Mammary epithelial cell (primary cell): ENCODE measurements at regions of chr3 and their contacts with region 1.

Region 1: DNA sequence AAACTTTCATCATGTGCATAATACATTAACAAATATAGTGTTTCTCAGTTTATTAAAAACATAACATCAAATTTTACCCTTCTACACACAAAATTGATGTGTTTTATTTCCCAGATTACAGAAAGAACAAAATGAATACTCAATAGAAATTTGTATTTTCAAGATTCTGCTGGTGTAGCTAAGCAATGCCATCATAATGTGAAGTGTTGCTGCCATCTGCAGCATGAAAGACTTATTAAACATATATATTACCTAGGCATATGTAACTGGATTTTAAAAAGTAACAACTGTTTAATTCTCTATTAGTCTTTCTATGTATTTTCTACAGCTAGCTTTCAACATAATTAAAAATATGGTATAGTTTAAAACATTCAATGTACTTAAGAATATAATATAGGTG is 27.5 kb downstream of the PLSCR5 start:
- DNase-seq: peak; percentile 40
- H3K4me3 ChIP-seq: no peak overlapping the region
- H3K27ac ChIP-seq: no peak overlapping the region
- H3K4me1 ChIP-seq: peaks cover 23% of the 10 kb centered on the region
- H3K27me3 ChIP-seq: no peaks in the 10 kb centered on the region
- CTCF ChIP-seq: peak; percentile 27 to 51

Region 2: DNA sequence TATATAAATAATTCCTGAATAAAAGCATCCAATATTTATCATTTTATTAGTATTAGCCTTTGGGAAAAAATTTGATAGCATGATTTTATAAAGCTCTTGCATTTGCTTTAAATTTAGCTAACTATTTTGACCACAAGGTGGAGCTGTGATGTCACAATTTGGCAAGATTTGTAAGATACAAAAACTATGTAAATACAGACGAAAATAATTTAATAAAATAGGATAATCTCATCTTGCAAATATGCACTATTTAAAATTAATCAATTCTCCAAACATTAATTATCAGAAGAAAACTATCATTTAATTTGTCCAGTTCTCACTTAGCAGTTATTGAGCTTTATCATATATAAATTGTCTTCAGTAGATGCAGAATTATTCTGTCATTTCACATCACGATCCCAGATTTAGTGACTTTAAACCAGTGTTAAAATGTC is 512.1 kb before region 1 on chr3:
- CTCF ChIA-PET with region 1: no interaction called
- dilution Hi-C with region 1: no loop called
- in situ Hi-C with region 1: loop called (anchors 25 kb)
- intact Hi-C with region 1: loop called (anchors 5 kb)
- DNase-seq: peak; percentile 24
- H3K4me3 ChIP-seq: no peak overlapping the region
- H3K27ac ChIP-seq: no peak overlapping the region
- H3K4me1 ChIP-seq: no peaks in the 10 kb centered on the region
- H3K27me3 ChIP-seq: no peaks in the 10 kb centered on the region
- CTCF ChIP-seq: peak; percentile 54 to 61

Region 3: GRCh38 chr3:146218880-146219866 is 358.5 kb before region 1 on chr3:
- CTCF ChIA-PET with region 1: no interaction called
- dilution Hi-C with region 1: no loop called
- in situ Hi-C with region 1: loop called (anchors 10 to 25 kb)
- intact Hi-C with region 1: loop called (anchors 1 kb)
- DNase-seq: no peak
- H3K4me3 ChIP-seq: no peak overlapping the region
- H3K27ac ChIP-seq: no peak overlapping the region
- H3K4me1 ChIP-seq: peaks cover 11% of the 10 kb centered on the region
- H3K27me3 ChIP-seq: no peaks in the 10 kb centered on the region
- CTCF ChIP-seq: peak; percentile 49 to 61

Region 4: GRCh38 chr3:146334151-146334550 is 243.5 kb before region 1 on chr3:
- CTCF ChIA-PET with region 1: no interaction called
- dilution Hi-C with region 1: no loop called
- in situ Hi-C with region 1: loop called (anchors 10 kb)
- intact Hi-C with region 1: loop called (anchors 1 kb)
- DNase-seq: peak; percentile 6
- H3K4me3 ChIP-seq: no peak overlapping the region
- H3K27ac ChIP-seq: no peak overlapping the region
- H3K4me1 ChIP-seq: no peaks in the 10 kb centered on the region
- H3K27me3 ChIP-seq: no peaks in the 10 kb centered on the region
- CTCF ChIP-seq: peak in 1 of 2 donors; percentile 57

Region 5: DNA sequence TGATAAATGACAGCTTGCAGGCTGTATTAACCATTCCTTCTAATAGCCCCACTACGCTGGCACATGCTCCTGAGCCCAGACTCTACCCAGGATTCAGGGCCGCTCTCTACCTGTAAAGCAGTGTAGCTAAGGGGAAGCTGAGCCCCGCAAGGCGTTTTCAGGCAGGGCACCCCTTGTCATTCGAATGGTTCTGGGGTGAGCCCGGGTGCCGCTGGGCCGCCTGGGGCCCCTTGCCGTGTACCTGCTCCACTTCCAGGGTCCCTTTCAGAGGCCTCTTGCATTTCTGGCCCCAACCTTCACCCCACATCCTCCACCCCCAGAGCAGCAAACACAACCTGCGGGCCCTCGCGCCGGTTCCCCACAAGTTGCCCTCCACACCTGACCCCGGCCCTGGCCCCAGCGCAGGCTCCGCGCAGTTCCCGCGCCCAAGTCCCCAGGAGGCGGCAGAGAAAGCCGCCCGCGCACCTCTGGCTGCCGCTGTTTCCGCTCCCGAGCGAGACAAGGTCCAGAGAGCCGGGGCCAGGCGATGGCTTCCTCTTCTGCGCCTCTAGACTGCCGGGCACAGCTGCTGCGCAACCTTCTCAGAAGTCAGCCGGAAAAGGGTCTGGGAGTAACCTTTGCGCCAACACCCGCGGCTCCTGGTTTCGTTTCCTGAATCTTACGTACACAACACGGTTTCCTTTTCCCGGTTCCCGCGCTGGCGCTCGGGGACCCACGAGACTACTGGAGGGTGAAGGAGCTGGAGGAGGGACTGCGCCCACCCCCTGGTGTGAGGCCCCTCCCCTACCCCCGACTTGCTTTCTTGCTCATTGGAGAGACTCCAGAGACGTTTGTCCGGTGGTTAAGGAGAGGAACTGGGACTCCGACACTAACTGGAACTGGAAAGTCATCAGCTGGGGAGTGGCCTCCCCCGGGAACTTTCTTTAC is 33.4 kb before region 1 on chr3 and contains the start of gene PLSCR1:
- CTCF ChIA-PET with region 1: no interaction called
- dilution Hi-C with region 1: no loop called
- in situ Hi-C with region 1: no loop called
- intact Hi-C with region 1: loop called (anchors 2 kb)
- DNase-seq: peak; percentile 98
- H3K4me3 ChIP-seq: peak within 1 kb of the TSS; percentile 55 to 82 (median 65)
- H3K27ac ChIP-seq: peak within 1 kb of the TSS; percentile 86
- H3K4me1 ChIP-seq: peaks cover 37% of the 10 kb centered on the region
- H3K27me3 ChIP-seq: no peaks in the 10 kb centered on the region
- CTCF ChIP-seq: peak in 1 of 2 donors; percentile 3
- total RNA-seq, gene PLSCR1: 23.0 to 53.8 TPM

Region 6: GRCh38 chr3:146589899-146590508 is 12.3 kb after region 1 on chr3:
- CTCF ChIA-PET with region 1: no interaction called
- dilution Hi-C with region 1: no loop called
- in situ Hi-C with region 1: no loop called
- intact Hi-C with region 1: no loop called
- DNase-seq: peak; percentile 36
- H3K4me3 ChIP-seq: no peak overlapping the region
- H3K27ac ChIP-seq: no peak overlapping the region
- H3K4me1 ChIP-seq: peaks cover 5% of the 10 kb centered on the region
- H3K27me3 ChIP-seq: no peaks in the 10 kb centered on the region
- CTCF ChIP-seq: peak; percentile 51 to 68